ENCODE measurements at regions of chr4 and their contacts with region 1.

Region 1: DNA sequence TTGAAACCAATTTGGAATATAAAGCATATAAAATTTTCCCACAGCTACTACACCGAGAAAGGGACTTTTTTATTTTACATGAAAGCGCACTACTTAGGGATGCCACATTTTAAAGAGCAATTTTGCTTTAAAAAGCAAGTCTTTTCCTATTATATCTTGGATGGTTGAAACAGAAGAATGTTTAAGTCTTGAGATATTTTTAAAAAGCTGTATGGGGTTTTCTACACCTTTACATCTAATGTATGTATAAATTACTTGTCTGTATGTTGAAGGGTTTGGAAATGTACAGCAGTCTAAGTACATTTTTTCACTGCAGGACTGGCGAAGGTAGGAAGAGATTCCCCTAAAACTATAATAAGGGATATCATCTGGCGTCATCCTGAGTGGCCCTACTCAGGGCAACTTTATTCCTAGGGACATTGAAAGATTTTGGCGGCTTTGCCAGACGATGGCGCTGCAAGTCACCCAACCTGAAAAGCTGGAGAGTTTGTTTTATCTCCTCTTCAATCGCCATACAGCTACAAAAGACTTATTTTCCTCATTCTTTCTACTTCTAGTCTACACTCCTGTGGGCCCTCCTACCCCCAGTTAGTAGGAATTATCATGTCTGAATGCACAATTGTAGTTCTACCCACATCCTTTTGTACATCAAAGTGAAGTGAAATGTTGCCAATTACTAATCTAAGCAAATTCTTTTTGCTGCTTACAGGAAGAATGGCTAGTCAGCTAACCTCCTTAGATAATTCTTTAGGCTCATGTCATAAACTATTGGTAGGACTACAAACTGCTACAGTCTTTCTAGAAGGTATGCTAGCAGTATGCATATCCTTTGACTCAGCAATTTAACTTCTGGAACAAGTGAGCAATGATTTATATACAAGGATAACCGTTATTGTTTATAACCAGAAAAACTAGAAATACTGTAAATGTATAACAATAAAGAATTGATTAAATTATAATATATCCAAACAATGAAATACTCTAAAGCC is 782 bp upstream of the NEK1 start:
- DNase-seq: peak; percentile 90
- H3K4me3 ChIP-seq: peak overlapping the region; percentile 88
- H3K27ac ChIP-seq: no peak overlapping the region
- H3K4me1 ChIP-seq: peaks cover 8% of the 10 kb centered on the region
- H3K27me3 ChIP-seq: no peaks in the 10 kb centered on the region
- CTCF ChIP-seq: peak; percentile 88

Region 2: GRCh38 chr4:169707958-169708643 is 94.9 kb after region 1 on chr4:
- CTCF ChIA-PET with region 1: interaction called, 5 read pairs
- POLR2A ChIA-PET with region 1: no interaction called
- intact Hi-C with region 1: loop called (anchors 2 kb)
- DNase-seq: no peak
- H3K4me3 ChIP-seq: no peak overlapping the region
- H3K27ac ChIP-seq: no peak overlapping the region
- H3K4me1 ChIP-seq: peaks cover 4% of the 10 kb centered on the region
- H3K27me3 ChIP-seq: no peaks in the 10 kb centered on the region
- CTCF ChIP-seq: no peak

Region 3: GRCh38 chr4:169723207-169723965 is 110.2 kb after region 1 on chr4:
- CTCF ChIA-PET with region 1: interaction called, 13 read pairs
- POLR2A ChIA-PET with region 1: no interaction called
- intact Hi-C with region 1: no loop called
- DNase-seq: peak; percentile 46
- H3K4me3 ChIP-seq: no peak overlapping the region
- H3K27ac ChIP-seq: no peak overlapping the region
- H3K4me1 ChIP-seq: no peaks in the 10 kb centered on the region
- H3K27me3 ChIP-seq: no peaks in the 10 kb centered on the region
- CTCF ChIP-seq: peak; percentile 65

Region 4: GRCh38 chr4:170027181-170027829 is 414.1 kb after region 1 on chr4:
- CTCF ChIA-PET with region 1: no interaction called
- POLR2A ChIA-PET with region 1: no interaction called
- intact Hi-C with region 1: loop called (anchors 5 kb)
- DNase-seq: peak; percentile 95
- H3K4me3 ChIP-seq: peak overlapping the region; percentile 64
- H3K27ac ChIP-seq: peak overlapping the region; percentile 87
- H3K4me1 ChIP-seq: peaks cover 3% of the 10 kb centered on the region
- H3K27me3 ChIP-seq: peaks cover 12% of the 10 kb centered on the region
- CTCF ChIP-seq: no peak

Region 5: GRCh38 chr4:170047771-170048354 is 434.7 kb after region 1 on chr4:
- CTCF ChIA-PET with region 1: interaction called, 8 read pairs
- POLR2A ChIA-PET with region 1: no interaction called
- intact Hi-C with region 1: loop called (anchors 5 kb)
- DNase-seq: peak; percentile 75
- H3K4me3 ChIP-seq: no peak overlapping the region
- H3K27ac ChIP-seq: no peak overlapping the region
- H3K4me1 ChIP-seq: peaks cover 3% of the 10 kb centered on the region
- H3K27me3 ChIP-seq: no peaks in the 10 kb centered on the region
- CTCF ChIP-seq: peak; percentile 82